ENCODE measurements at regions of chr17 and their contacts with region 1.

Region 1: DNA sequence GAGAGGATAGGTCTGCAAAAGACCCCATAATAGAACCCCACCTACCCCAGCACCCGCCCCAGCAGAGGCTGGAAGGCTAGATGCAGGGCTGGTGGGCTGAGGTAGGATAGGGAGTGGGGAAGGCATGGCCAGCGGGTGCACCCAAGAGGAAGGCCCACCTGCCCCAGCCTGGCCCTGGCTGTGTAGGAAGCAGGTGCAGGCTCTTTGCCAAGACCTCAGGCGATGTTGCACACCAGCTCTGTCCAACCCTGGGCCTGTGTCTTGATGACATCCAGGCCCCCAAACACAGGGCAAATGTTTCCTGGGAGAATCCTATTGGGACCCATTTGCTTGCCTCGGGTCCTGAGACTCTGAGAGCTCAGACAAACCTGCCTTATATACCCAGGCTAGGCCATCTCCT is 12.2 kb downstream of the UNC119 start:
- DNase-seq: no peak
- H3K4me3 ChIP-seq: no peak overlapping the region
- H3K27ac ChIP-seq: no peak overlapping the region
- H3K4me1 ChIP-seq: peaks cover 0 to 7% (median 0%) of the 10 kb centered on the region in 4 experiments; a peak in 2 of 7 replicates
- H3K27me3 ChIP-seq: no peaks in the 10 kb centered on the region
- CTCF ChIP-seq: no peak
- EP300 ChIP-seq: no peak
- POLR2A ChIP-seq: no peak
- RAD21 ChIP-seq: no peak

Region 2: GRCh38 chr17:28484296-28484695 is 55.9 kb before region 1 on chr17:
- CTCF ChIA-PET with region 1: interaction called, 13 read pairs
- POLR2A ChIA-PET with region 1: interaction called, 3 read pairs
- DNase-seq: no peak
- H3K4me3 ChIP-seq: no peak overlapping the region
- H3K27ac ChIP-seq: no peak overlapping the region
- H3K4me1 ChIP-seq: peaks cover 3 to 12% (median 6%) of the 10 kb centered on the region in 4 experiments
- H3K27me3 ChIP-seq: peaks cover 0 to 3% (median under 1%) of the 10 kb centered on the region in 4 experiments; a peak in 1 of 7 replicates
- CTCF ChIP-seq: no peak
- EP300 ChIP-seq: no peak
- POLR2A ChIP-seq: no peak
- RAD21 ChIP-seq: no peak

Region 3: DNA sequence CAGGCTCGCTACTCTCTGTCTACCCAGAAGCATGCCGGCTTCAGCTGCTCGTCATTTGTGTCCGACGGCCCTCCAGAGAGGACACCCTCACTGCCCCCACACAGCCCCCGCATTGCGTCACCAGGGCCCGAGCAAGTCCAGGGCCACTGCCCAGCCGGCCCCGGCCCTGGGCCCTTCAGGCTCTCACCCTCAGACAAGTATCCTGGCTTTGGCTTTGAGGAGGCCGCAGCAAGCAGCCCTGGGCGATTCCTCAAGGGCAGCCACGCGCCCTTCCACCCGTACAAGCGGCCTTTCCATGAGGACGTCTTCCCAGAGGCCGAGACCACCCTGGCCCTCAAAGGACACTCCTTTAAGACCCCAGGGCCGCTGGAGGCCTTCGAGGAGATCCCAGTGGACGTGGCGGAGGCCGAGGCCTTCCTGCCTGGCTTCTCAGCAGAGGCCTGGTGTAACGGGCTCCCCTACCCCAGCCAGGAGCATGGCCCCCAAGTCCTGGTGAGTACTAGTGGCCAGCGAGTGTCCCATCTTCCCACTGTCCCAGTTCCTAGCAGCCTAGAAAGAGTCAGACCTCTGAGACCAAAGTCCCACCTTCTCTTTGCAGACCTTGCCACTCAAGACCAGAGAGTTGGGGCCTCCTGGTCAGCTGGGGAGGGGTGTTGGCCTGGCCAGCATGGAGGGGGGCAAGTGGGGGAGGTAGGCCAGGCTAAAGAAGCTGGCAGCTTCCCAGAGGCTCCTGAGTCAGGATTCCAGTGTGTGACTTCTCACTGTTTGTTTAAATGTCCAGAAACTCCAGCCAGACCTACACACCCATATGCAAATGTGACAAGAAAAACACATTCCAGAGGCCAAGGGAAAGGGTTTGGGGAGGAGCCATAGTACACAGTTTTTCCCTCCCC is 15.5 kb before region 1 on chr17:
- CTCF ChIA-PET with region 1: interaction called, 27 read pairs
- POLR2A ChIA-PET with region 1: no interaction called
- DNase-seq: no peak
- H3K4me3 ChIP-seq: no peak overlapping the region
- H3K27ac ChIP-seq: no peak overlapping the region
- H3K4me1 ChIP-seq: peaks cover 0 to 15% (median 4%) of the 10 kb centered on the region in 4 experiments; a peak in 3 of 7 replicates
- H3K27me3 ChIP-seq: no peaks in the 10 kb centered on the region
- CTCF ChIP-seq: no peak
- EP300 ChIP-seq: no peak
- POLR2A ChIP-seq: no peak
- RAD21 ChIP-seq: no peak

Measured in H1 (cell line).